HCT116 (cell line): ENCODE measurements at regions of chr5 and their contacts with region 1.

Region 1: DNA sequence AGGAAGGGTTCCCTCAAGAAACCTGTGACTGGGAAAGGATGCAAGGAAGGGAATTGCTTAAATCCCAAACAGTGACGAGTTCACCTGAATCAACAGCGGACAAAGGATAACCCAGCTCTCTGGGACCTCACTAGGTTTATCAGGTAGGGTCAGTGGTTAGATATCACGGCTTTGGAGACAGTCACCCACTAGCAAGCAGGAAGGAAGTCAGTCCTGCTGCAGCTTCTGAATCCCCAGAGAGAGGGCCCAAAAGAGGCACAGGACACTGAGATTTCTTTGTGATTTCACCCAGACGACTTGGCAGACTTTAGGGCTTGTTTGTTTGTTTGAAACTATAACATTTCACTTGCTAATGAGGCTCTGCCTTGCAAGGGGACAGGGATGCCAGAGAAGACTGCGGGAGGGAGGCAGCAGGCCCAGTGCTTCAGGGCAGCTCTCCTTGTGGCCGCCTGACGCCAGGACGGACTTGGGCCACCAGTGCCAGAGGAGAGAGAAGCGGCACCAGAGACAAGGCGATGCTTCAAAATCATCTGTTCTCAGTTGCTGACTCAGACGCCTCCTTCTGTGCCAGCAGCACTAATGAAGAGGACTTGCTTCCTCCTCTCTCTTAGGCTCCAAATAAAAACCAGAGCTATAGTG is 275.6 kb upstream of the SLC30A5 start:
- DNase-seq: no peak
- ATAC-seq: no peak
- H3K4me3 ChIP-seq: no peak overlapping the region
- H3K27ac ChIP-seq: no peak overlapping the region
- H3K4me1 ChIP-seq: no peaks in the 10 kb centered on the region
- H3K27me3 ChIP-seq: no peaks in the 10 kb centered on the region
- CTCF ChIP-seq: no peak
- POLR2A ChIP-seq: no peak
- RAD21 ChIP-seq: no peak

Region 2: DNA sequence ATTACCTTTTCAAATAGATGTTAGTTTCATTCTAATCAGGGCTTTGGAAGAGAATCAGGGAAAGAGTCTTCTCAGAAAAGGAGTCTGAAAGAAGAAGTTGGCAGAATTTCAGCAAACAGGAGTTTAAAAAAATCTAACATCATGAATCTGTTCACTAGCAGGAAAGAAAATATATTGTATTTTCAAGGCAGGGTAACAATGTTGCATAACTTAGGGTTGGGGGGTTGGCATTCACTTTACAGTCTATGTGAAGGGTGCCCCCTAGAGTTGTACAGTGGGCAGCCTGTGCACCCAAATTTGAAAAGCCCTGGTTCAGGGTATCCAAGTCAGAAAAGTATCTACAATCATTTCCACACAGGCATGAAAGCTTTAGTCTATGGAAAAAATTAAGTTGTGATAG is 72.7 kb before region 1 on chr5:
- CTCF ChIA-PET with region 1: no interaction called
- POLR2A ChIA-PET with region 1: no interaction called
- RAD21 ChIA-PET with region 1: no interaction called
- intact Hi-C with region 1: loop called (anchors 10 kb)
- DNase-seq: no peak
- ATAC-seq: no peak
- H3K4me3 ChIP-seq: no peak overlapping the region
- H3K27ac ChIP-seq: no peak overlapping the region
- H3K4me1 ChIP-seq: no peaks in the 10 kb centered on the region
- H3K27me3 ChIP-seq: no peaks in the 10 kb centered on the region
- CTCF ChIP-seq: peak; percentile 33 to 53 (median 53); a peak in 5 of 6 replicates
- POLR2A ChIP-seq: no peak
- RAD21 ChIP-seq: peak; percentile 70

Region 3: GRCh38 chr5:68898951-68899471 is 80.8 kb after region 1 on chr5:
- CTCF ChIA-PET with region 1: no interaction called
- POLR2A ChIA-PET with region 1: no interaction called
- RAD21 ChIA-PET with region 1: no interaction called
- intact Hi-C with region 1: no loop called
- DNase-seq: peak; percentile 29
- ATAC-seq: peak; percentile 75
- H3K4me3 ChIP-seq: no peak overlapping the region
- H3K27ac ChIP-seq: peak overlapping the region; percentile 26; the same call in 1 of the 2 replicates
- H3K4me1 ChIP-seq: peaks cover 3 to 18% of the 10 kb centered on the region in 2 experiments; a peak in 3 of 4 replicates
- H3K27me3 ChIP-seq: no peaks in the 10 kb centered on the region
- CTCF ChIP-seq: no peak
- POLR2A ChIP-seq: no peak
- RAD21 ChIP-seq: no peak

Region 4: DNA sequence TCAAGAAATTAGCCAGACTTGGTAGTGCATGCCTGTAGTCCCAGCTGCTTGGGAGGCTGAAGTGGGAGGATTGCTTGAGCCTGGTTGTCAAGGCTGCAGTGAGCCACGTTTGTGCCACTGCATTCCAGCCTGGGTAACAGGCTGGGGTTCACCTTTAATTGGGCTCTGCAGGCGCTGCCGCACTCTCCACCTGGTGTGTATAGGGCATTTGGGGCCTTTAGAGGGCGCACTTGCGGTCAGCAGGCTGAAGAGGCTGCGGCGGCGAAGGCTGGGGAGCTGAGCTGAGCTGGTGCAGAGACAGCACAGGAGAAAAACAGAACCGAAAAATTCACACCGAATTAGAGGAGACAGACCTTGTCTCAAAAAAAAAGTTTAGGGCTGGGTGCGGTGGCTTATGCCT is 447.8 kb after region 1 on chr5:
- CTCF ChIA-PET with region 1: no interaction called
- POLR2A ChIA-PET with region 1: no interaction called
- RAD21 ChIA-PET with region 1: no interaction called
- intact Hi-C with region 1: no loop called
- DNase-seq: peak; percentile 13
- ATAC-seq: peak; percentile 97
- H3K4me3 ChIP-seq: no peak overlapping the region
- H3K27ac ChIP-seq: no peak overlapping the region
- H3K4me1 ChIP-seq: no peaks in the 10 kb centered on the region
- H3K27me3 ChIP-seq: no peaks in the 10 kb centered on the region
- CTCF ChIP-seq: peak; percentile 21 to 68 (median 66); a peak in 4 of 6 replicates
- POLR2A ChIP-seq: no peak
- RAD21 ChIP-seq: peak; percentile 49; the same call in 1 of the 2 replicates